ENCODE measurements at regions of chr1 and their contacts with region 1.

Region 1: DNA sequence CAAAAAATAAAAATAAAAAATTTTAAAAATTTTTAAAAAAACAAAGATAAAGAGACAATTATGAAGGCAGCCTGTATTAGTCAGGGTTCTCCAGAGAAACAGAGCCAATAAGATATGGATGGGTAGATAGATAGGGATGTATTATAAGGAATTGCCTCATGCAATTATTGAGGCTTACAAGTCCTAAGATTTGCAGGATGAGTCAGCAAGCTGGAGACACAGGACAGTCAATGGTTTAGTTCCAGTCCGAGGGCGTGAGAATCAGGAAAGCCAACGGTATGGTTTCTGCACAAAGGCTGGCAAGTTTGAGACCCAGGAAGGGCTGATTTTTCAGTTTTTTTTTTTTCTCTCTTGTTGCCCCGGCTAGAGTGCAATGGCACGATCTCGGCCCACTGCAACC is 24.1 kb upstream of the EIF4G3 start:
- DNase-seq: no peak
- ATAC-seq: no peak
- H3K4me3 Mint-ChIP-seq: no peak overlapping the region
- H3K27ac Mint-ChIP-seq: no peak overlapping the region
- H3K4me1 Mint-ChIP-seq: no peaks in the 10 kb centered on the region
- H3K27me3 Mint-ChIP-seq: peaks cover 4% of the 10 kb centered on the region

Region 2: DNA sequence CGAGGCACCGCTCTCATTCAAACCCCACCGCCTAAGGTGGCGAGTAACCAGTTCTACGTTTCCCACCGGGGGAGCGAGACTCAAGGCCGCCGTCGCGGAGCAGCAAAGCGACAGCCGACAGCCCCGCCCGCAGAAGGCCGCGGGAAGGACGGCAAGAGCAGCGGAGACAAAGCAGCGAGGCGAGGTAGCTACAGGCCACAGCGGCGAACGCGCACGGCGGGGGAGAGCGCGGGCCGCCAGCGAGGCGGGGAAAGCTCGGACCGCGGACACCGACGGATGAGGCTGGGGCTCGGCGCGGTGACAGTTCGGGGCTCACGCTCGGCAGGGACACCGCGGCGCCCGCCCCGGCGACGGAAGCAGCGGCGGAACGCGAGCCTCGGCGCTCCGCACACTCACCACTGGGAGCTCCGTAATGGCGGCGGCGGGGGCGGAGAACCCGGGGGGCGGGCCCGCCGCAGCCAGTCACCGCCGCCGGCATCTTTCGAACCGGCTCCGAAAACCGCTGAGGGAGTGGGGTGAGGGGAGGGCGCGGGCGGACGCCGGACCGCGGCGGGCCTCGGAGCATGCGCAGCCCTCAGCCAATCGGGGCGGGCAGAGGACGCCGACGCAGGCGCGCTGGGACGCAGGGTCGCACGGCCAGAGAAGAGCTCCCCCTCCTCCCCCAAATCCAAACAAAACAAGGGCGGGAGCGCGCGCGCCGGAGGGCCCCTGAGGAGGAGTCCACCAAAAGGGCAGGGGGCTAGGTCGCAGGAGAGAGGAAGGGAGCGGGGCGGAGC is 414.3 kb before region 1 on chr1:
- CTCF ChIA-PET with region 1: interaction called, 23 read pairs
- POLR2A ChIA-PET with region 1: interaction called, 7 read pairs
- DNase-seq: peak; percentile 95
- ATAC-seq: peak; percentile 84
- H3K4me3 Mint-ChIP-seq: peak overlapping the region; percentile 91
- H3K27ac Mint-ChIP-seq: peak overlapping the region; percentile 97
- H3K4me1 Mint-ChIP-seq: peaks cover 31% of the 10 kb centered on the region
- H3K27me3 Mint-ChIP-seq: no peaks in the 10 kb centered on the region

Region 3: DNA sequence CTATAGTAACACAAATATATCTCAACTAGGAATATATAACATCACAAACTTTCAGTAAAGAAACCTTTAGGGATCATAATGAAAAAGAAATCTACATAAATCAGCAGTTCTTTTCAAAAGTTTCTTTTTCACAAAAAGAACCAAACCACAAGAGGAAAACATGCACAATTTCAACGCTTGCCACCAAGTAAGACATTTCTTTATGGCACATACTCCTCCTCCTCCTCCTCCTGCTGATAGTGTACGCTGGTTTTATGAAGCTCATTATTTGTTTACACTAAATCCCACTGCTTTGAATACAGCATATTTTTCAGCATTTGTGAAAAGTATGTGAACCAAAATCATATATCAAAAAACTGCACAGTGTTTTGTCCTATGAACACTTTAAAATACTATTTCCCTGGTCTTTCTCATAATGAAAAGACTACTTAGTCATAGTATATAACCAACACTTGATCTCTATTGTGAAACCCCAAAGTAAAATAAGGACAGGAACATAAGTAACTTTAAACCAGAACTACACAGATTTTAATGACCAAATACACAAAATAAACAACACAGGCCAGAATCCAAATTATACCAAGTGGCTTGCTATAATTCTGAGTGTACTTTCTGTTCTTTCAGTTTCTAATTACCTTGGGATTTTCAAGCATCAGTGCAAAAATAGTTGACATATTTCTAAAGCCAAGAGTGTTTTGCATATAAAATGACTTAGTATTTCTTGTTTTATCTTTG is 208.3 kb before region 1 on chr1:
- CTCF ChIA-PET with region 1: interaction called, 13 read pairs
- POLR2A ChIA-PET with region 1: no interaction called
- DNase-seq: no peak
- ATAC-seq: no peak
- H3K4me3 Mint-ChIP-seq: no peak overlapping the region
- H3K27ac Mint-ChIP-seq: no peak overlapping the region
- H3K4me1 Mint-ChIP-seq: peaks cover 22% of the 10 kb centered on the region
- H3K27me3 Mint-ChIP-seq: no peaks in the 10 kb centered on the region

Region 4: GRCh38 chr1:21176586-21177555 is 23.9 kb before region 1 on chr1 and contains the start of gene EIF4G3:
- CTCF ChIA-PET with region 1: interaction called, 16 read pairs
- POLR2A ChIA-PET with region 1: no interaction called
- DNase-seq: peak; percentile 100
- ATAC-seq: peak; percentile 97
- H3K4me3 Mint-ChIP-seq: peak within 1 kb of the TSS; percentile 82
- H3K27ac Mint-ChIP-seq: peak within 1 kb of the TSS; percentile 90
- H3K4me1 Mint-ChIP-seq: peaks cover 30% of the 10 kb centered on the region
- H3K27me3 Mint-ChIP-seq: peaks cover 5% of the 10 kb centered on the region
- total RNA-seq, gene EIF4G3: 37.9 to 41.2 TPM